Astrocyte of the cerebellum (primary cell): ENCODE measurements at regions of chr16 and their contacts with region 1.

Region 1: DNA sequence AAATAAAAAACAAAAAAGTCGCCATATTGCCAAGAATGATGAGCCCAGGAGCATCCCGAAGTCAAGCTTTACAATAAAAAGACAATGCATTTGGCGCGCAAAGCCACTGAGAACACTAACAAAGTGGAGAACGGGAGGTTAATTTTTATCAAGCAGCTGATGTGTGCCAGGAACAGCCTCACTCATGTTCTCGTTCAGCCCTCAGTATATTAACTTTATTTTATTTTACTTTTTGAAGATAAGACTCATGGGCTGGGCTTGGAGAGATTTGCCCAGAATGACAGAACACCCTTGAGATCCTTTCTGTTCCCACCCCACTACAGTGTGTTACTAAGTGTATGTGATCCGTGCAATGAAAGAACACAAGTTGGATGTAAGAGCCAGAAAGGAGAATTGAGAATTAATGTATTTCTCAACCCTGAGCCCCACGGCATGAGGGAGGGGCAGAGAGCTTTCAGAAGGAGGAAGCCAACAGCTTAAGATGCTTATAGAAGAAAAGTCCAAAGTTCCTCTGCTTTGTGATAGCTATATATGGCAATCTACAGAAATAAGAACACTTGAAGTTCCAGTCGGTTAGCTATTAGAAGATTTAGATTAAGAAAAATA is 48.4 kb downstream of the COTL1 start:
- DNase-seq: no peak
- H3K4me3 ChIP-seq: no peak overlapping the region
- CTCF ChIP-seq: no peak

Region 2: DNA sequence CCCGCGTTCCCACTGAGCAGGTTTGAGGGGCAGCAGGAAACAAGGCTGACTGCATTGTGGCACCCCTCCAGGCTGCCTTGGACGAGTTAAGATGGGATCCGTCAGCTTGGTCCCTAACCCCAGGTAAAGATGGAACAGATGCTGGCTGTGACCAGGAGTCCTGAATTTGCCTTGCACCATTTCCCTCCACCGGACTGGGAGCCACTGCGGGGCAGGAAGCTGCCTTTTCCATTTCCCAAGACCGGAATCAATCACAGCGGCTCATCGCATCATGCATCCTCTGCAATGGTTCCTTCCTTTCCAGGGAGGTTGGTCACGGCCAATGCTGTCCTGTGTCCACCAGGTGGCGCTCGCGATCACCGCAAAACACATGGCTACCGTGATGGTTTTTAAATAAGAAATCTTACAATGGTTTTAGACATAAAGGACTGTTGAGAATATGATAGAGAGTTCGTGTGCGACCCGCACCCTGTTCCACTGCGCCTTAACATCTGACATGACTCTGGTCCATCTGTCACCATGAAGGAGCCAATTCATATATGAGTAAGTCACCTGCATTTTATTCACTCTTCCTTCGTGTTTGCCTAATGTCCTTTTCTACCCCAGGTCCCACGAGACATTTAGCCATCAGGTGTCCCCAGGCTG is 58.2 kb before region 1 on chr16:
- in situ Hi-C with region 1: no loop called
- DNase-seq: peak; percentile 79
- H3K4me3 ChIP-seq: no peak overlapping the region
- CTCF ChIP-seq: peak; percentile 90

Region 3: DNA sequence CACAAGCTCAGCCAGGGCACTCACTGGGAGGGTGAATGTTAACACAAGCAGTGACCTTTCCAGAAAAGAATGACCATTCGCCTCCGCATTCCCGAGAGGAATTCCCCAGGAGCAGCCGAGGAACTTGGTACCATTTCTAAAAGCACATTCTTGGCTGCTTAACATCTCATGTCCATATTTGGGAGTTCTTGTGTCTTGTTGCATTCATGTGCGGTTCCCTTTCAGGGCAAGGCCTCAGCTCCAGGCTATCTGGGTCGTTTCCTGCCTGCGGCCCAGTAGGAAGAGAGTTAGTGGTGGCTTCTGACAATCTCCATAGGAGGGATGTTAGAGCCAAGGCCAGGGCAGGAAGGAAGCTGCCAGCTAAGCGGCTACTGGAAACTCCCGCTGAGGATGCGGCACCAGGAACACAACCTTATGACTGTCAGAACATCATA is 37.2 kb before region 1 on chr16:
- in situ Hi-C with region 1: no loop called
- DNase-seq: peak; percentile 74
- H3K4me3 ChIP-seq: no peak overlapping the region
- CTCF ChIP-seq: no peak

Region 4: GRCh38 chr16:84663433-84664101 is 94.1 kb after region 1 on chr16:
- in situ Hi-C with region 1: loop called (anchors 5 kb)
- DNase-seq: no peak
- H3K4me3 ChIP-seq: no peak overlapping the region
- CTCF ChIP-seq: no peak